Heart left ventricle (tissue), 16 donors: ENCODE measurements at regions of chr7 and their contacts with region 1.

Region 1: GRCh38 chr7:36079446-36080025 is 73.5 kb upstream of the EEPD1 start:
- DNase-seq: no peak
- ATAC-seq: no peak
- H3K4me3 ChIP-seq: no peak overlapping the region
- H3K27ac ChIP-seq: no peak overlapping the region
- H3K4me1 ChIP-seq: peaks cover 0 to 20% (median 6%) of the 10 kb centered on the region in 12 donors
- H3K27me3 ChIP-seq: no peaks in the 10 kb centered on the region
- CTCF ChIP-seq: no peak
- POLR2A ChIP-seq: no peak

Region 2: GRCh38 chr7:36029853-36030515 is 49.6 kb before region 1 on chr7:
- intact Hi-C with region 1: loop called in 2 of 10 experiments (anchors 5 kb)
- DNase-seq: no peak
- ATAC-seq: no peak
- H3K4me3 ChIP-seq: no peak overlapping the region
- H3K27ac ChIP-seq: no peak overlapping the region
- H3K4me1 ChIP-seq: peaks cover 0 to 4% (median 2%) of the 10 kb centered on the region in 12 donors
- H3K27me3 ChIP-seq: no peaks in the 10 kb centered on the region
- CTCF ChIP-seq: no peak
- POLR2A ChIP-seq: no peak

Region 3: GRCh38 chr7:36037121-36037662 is 42.3 kb before region 1 on chr7:
- intact Hi-C with region 1: loop called in 1 of 10 experiments (anchors 5 kb)
- DNase-seq: peak in 4 of 5 donors; percentile 58 to 73 (median 70)
- ATAC-seq: peak; percentile 74 to 87 (median 79)
- H3K4me3 ChIP-seq: peak overlapping the region in 1 of 12 donors; percentile 36
- H3K27ac ChIP-seq: peak overlapping the region; percentile 56 to 94 (median 84)
- H3K4me1 ChIP-seq: peaks cover 0 to 53% (median 35%) of the 10 kb centered on the region in 12 donors
- H3K27me3 ChIP-seq: no peaks in the 10 kb centered on the region
- CTCF ChIP-seq: peak in 1 of 12 donors; percentile 20
- POLR2A ChIP-seq: no peak